ENCODE measurements at regions of chr6 and their contacts with region 1.

Region 1: DNA sequence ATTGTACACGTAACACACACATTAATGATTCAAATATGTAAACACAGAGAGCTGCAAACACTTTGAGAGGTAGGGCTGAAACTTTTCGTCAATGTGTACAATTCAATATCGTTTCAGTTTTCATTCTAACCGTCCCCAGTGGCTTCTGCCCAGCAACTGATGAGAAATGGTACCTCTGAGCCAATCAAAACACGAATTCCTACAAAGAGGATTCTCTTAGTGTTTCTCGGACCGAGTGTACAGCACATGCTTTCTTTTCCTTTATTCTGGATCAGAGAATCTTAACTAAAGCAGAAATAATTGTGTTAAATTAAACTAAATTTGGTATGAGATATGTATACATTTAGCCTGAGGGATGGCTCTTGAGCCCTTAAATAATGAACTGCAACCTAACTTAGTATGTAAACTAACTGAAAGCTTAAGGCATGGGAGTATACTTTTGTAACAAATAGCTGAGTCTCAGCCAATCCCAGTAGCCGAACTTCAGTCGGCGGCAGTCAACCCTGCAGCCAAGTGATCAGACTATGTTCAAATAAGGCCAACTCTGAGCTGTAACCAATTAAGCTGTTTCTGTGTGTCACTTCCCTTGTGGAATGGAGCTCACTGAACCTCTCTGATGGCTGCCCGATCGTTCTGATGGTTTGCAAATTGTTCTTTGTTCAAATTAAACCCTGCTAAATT is 16.1 kb downstream of the BTN2A1 start:
- DNase-seq: peak; percentile 60 to 96 (median 76)
- ATAC-seq: peak; percentile 91
- H3K4me3 ChIP-seq: peak overlapping the region; percentile 56
- H3K4me3 Mint-ChIP-seq: peak overlapping the region; percentile 94
- H3K27ac ChIP-seq: peak overlapping the region; percentile 85 to 90
- H3K27ac Mint-ChIP-seq: peak overlapping the region; percentile 99
- H3K4me1 ChIP-seq: peaks cover 45% of the 10 kb centered on the region
- H3K4me1 Mint-ChIP-seq: peaks cover 64% of the 10 kb centered on the region
- H3K27me3 ChIP-seq: no peaks in the 10 kb centered on the region
- H3K27me3 Mint-ChIP-seq: no peaks in the 10 kb centered on the region
- CTCF ChIP-seq: no peak

Region 2: GRCh38 chr6:26065952-26066380 is 407.9 kb before region 1 on chr6:
- CTCF ChIA-PET with region 1: no interaction called
- POLR2A ChIA-PET with region 1: no interaction called
- intact Hi-C with region 1: no loop called
- DNase-seq: peak in 11 of 14 experiments; percentile 14 to 87 (median 39)
- ATAC-seq: peak; percentile 93
- H3K4me3 ChIP-seq: no peak overlapping the region
- H3K4me3 Mint-ChIP-seq: no peak overlapping the region
- H3K27ac ChIP-seq: no peak overlapping the region
- H3K27ac Mint-ChIP-seq: no peak overlapping the region
- H3K4me1 ChIP-seq: peaks cover 3% of the 10 kb centered on the region
- H3K4me1 Mint-ChIP-seq: peaks cover 11% of the 10 kb centered on the region
- H3K27me3 ChIP-seq: no peaks in the 10 kb centered on the region
- H3K27me3 Mint-ChIP-seq: no peaks in the 10 kb centered on the region
- CTCF ChIP-seq: peak; percentile 85

Region 3: DNA sequence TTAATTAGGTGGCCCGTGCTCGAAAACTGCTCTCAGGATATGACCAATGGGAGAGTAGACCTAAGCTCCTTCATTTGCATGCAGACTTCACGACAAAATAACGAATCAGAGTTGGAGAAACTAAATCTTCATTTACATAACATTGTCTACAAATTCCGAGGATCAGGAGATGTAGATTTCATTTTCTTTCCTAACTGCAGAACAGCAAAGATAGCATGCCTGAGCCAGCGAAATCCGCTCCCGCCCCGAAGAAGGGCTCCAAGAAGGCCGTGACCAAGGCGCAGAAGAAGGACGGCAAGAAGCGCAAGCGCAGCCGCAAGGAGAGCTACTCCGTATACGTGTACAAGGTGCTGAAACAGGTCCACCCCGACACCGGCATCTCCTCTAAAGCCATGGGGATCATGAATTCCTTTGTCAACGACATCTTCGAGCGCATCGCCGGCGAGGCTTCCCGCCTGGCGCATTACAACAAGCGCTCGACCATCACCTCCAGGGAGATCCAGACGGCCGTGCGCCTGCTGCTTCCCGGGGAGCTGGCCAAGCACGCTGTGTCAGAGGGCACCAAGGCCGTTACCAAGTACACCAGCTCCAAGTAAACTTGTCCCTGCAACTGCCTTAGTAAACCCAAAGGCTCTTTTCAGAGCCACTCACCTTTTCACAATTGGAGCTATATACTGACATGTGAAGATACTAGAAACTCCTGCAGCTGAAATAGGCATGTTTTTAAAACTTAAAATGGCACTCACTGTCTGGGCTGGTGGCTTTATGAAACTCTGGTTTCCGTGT is 290.1 kb before region 1 on chr6:
- CTCF ChIA-PET with region 1: no interaction called
- POLR2A ChIA-PET with region 1: interaction called, 11 read pairs
- intact Hi-C with region 1: no loop called
- DNase-seq: peak in 13 of 14 experiments; percentile 20 to 94 (median 48)
- ATAC-seq: peak; percentile 89
- H3K4me3 ChIP-seq: peak overlapping the region; percentile 62
- H3K4me3 Mint-ChIP-seq: peak overlapping the region; percentile 99
- H3K27ac ChIP-seq: peak overlapping the region; percentile 43 to 72
- H3K27ac Mint-ChIP-seq: peak overlapping the region; percentile 86
- H3K4me1 ChIP-seq: peaks cover 34% of the 10 kb centered on the region
- H3K4me1 Mint-ChIP-seq: peaks cover 42% of the 10 kb centered on the region
- H3K27me3 ChIP-seq: no peaks in the 10 kb centered on the region
- H3K27me3 Mint-ChIP-seq: no peaks in the 10 kb centered on the region
- CTCF ChIP-seq: no peak

Region 4: DNA sequence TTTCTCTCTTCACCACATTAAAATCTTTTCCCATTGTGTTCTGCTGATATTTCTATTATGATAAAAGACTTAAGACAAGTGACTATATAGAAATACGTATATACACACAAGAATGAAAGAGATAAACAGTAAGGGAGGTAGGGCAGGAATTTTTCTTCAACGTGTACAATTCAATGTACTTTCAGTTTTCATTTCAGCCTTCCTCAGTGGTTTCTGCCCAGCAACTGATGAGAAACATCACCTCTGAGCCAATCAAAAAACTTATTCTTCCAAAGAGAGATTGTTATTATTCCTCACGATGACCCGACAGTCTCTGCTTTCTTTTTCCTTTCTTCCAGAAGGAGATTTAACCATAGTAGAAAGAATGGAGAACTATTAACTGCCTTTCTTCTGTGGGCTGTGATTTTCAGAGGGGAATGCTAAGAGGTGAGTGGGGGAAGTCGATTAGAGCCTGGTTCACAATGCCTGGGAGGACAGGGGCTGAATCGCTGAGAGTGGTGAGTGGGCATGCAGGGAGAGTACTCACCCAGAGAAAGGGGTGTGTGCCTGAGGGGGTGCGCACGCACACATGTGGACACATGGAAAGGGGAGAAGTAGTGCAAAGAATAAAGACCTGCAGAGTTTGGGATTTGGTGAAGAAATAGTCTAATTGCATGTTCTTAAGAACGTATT is 71.8 kb before region 1 on chr6 and contains the start of gene BTN3A1:
- CTCF ChIA-PET with region 1: no interaction called
- POLR2A ChIA-PET with region 1: interaction called, 6 read pairs
- intact Hi-C with region 1: loop called (anchors 5 to 10 kb)
- DNase-seq: peak; percentile 27 to 90 (median 43)
- ATAC-seq: peak; percentile 89
- H3K4me3 ChIP-seq: peak within 1 kb of the TSS; percentile 77
- H3K4me3 Mint-ChIP-seq: peak within 1 kb of the TSS; percentile 97
- H3K27ac ChIP-seq: peak within 1 kb of the TSS; percentile 80 to 87
- H3K27ac Mint-ChIP-seq: peak within 1 kb of the TSS; percentile 98
- H3K4me1 ChIP-seq: peaks cover 51% of the 10 kb centered on the region
- H3K4me1 Mint-ChIP-seq: peaks cover 53% of the 10 kb centered on the region
- H3K27me3 ChIP-seq: no peaks in the 10 kb centered on the region
- H3K27me3 Mint-ChIP-seq: no peaks in the 10 kb centered on the region
- CTCF ChIP-seq: no peak
- total RNA-seq, gene BTN3A1: 109 TPM

Region 5: DNA sequence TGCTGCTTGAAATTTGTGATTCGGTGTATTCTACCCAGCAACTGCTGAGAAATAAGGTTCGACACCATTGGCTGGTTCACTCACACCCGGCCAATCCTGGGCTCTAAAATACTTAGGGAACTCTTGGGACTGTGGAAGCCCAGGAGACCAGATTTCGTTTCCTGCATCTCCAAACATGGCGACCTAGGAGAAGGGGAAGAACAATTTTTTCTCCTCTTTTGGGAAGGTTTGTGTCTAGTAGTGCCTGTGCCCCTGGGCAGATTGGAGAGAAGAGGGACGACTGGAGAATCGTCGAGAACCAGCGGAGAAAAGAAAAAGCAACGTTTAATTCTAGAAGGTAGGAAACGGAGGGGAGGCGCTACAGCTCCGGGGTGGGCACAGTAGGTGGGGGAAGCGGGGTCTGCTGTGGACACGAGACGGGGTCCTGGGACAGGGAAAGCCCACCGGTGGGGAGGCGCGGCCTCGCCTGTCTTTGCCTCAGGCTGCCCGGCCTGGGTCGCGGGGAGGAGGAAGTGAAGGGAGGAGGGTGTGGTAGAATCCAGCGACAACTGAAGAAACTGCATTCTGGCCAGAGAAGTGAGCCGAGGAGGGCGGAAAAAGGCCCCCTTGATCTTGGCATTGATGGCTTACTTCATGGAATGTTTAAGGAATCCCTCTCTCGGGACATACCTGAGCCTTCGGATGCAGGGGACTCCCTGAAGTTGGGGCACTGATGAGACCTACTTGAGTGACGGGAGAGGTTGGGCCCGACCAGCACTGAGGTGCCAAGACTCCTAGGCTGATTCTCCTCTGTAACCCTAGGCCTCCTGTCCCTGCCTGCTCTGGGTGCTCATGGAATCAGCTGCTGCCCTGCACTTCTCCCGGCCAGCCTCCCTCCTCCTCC is 15.9 kb before region 1 on chr6 and contains the start of gene BTN2A1:
- CTCF ChIA-PET with region 1: interaction called, 4 read pairs
- POLR2A ChIA-PET with region 1: interaction called, 31 read pairs
- intact Hi-C with region 1: loop called (anchors 2 kb)
- DNase-seq: peak; percentile 30 to 91 (median 52)
- ATAC-seq: peak; percentile 97
- H3K4me3 ChIP-seq: peak within 1 kb of the TSS; percentile 91
- H3K4me3 Mint-ChIP-seq: peak within 1 kb of the TSS; percentile 98
- H3K27ac ChIP-seq: peak within 1 kb of the TSS; percentile 73 to 91
- H3K27ac Mint-ChIP-seq: peak within 1 kb of the TSS; percentile 92
- H3K4me1 ChIP-seq: peaks cover 44% of the 10 kb centered on the region
- H3K4me1 Mint-ChIP-seq: peaks cover 64% of the 10 kb centered on the region
- H3K27me3 ChIP-seq: no peaks in the 10 kb centered on the region
- H3K27me3 Mint-ChIP-seq: no peaks in the 10 kb centered on the region
- CTCF ChIP-seq: no peak
- total RNA-seq, gene BTN2A1: 16.2 to 17.5 TPM

Region 6: DNA sequence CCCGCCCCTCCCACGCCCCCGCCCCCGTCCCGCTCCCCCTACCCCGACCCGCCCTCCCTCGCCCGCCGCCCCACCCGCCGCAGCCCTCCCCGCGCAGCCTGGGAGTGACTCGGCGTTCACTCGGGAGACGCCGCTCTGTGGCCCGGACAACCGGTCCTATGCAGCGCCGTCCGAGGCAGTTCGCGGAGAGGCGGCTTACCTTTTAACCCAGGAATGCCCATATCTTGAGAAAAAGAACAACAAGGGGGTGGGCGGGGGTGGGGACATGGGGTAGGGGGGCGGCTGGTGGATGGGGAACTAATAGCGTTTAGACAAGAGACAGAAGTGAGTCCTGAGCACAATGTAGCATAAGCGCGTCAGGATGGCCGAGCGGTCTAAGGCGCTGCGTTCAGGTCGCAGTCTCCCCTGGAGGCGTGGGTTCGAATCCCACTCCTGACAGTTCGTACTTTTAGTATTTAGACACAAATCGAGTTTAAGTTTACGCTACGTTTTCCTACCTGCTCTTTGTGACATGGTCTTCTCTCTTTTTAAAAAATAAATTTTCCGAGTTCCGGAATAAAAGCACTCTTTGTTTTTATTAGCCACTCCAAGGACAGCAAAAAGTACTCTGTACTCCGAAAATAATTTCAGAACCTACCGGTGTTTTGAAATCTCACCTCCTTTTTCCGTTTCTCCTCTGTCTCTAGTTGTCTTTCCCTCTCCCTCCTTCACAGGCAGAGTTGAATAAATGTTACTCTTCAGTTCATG is 47.1 kb after region 1 on chr6:
- CTCF ChIA-PET with region 1: no interaction called
- POLR2A ChIA-PET with region 1: interaction called, 42 read pairs
- intact Hi-C with region 1: loop called (anchors 2 kb)
- DNase-seq: peak; percentile 77 to 93 (median 84)
- ATAC-seq: peak; percentile 81
- H3K4me3 ChIP-seq: peak overlapping the region; percentile 65
- H3K4me3 Mint-ChIP-seq: peak overlapping the region; percentile 89
- H3K27ac ChIP-seq: peak overlapping the region; percentile 50 to 61
- H3K27ac Mint-ChIP-seq: peak overlapping the region; percentile 99
- H3K4me1 ChIP-seq: peaks cover 10% of the 10 kb centered on the region
- H3K4me1 Mint-ChIP-seq: peaks cover 30% of the 10 kb centered on the region
- H3K27me3 ChIP-seq: no peaks in the 10 kb centered on the region
- H3K27me3 Mint-ChIP-seq: peaks cover 9% of the 10 kb centered on the region
- CTCF ChIP-seq: no peak

Region 7: DNA sequence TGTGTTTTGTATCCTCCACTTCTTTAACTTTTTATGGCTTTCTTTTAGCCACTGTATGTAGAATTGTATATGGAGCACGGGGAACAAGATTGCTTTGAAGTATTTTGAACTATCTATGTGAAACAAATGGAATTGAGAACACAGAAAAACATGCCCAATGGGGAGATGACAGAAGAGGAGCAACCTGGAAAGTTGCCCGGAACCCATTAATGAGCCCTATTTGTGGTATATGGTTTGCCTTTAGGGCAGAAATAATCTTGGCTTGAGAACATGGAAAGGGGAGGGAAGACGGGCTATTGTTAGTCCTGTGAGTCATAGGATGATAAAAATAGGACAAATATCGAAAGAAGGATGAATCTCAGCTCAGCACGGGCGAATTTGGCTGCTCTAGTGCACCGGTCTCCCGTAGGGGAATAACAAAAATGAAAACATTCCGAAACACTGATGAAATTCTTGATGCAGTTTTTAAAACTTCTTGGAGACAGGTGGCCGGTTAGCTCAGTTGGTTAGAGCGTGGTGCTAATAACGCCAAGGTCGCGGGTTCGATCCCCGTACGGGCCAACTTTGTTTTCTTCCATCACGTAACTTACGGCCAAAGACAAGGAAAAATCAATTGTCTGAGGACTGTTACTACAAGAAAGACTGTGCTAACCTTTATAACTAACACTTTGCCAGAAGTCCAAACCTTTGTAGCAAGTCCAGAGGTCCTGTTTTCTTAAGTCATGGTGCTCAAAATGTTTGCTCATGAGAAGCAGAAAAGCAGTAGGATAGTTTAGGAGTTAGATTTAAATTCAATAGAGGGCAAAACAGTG is 79.9 kb after region 1 on chr6:
- CTCF ChIA-PET with region 1: no interaction called
- POLR2A ChIA-PET with region 1: interaction called, 19 read pairs
- intact Hi-C with region 1: no loop called
- DNase-seq: peak; percentile 51 to 91 (median 64)
- ATAC-seq: peak; percentile 30
- H3K4me3 ChIP-seq: peak overlapping the region; percentile 60
- H3K4me3 Mint-ChIP-seq: no peak overlapping the region
- H3K27ac ChIP-seq: no peak overlapping the region
- H3K27ac Mint-ChIP-seq: no peak overlapping the region
- H3K4me1 ChIP-seq: peaks cover 33% of the 10 kb centered on the region
- H3K4me1 Mint-ChIP-seq: peaks cover 25% of the 10 kb centered on the region
- H3K27me3 ChIP-seq: no peaks in the 10 kb centered on the region
- H3K27me3 Mint-ChIP-seq: peaks cover 8% of the 10 kb centered on the region
- CTCF ChIP-seq: no peak